HEK293T (cell line): ENCODE measurements at regions of chr17 and their contacts with region 1.

Region 1: GRCh38 chr17:78723001-78723796 is 58.9 kb downstream of the CYTH1 start:
- DNase-seq: peak; percentile 54

Region 2: DNA sequence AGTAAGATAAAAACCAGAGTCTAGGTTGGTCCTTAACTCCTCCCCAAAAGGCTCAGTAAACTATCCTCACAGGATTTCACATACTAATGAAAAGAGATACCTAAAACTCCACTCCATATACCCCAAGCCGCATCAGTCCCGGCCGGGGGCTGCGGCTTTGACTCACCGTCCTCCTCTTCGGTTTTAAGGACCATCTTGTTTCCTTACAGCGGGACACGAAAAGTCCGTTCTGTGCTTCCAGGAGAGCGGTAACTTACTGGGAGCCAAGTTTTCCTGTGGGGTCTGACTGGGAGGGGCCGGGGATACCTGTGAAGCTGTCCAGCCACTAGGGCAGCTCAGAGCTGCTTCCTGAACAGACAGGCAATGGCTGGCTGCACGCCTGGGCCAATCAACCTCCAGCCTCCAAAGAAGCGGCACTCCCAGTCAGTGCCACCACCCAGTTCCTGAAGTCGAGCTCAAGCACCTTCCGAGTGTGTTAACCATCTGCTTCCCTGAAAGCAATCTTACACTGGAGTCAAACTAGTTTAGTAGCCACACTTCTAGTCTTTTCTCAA is 13.4 kb after region 1 on chr17:
- CTCF ChIA-PET with region 1: interaction called, 5 read pairs
- POLR2A ChIA-PET with region 1: interaction called, 42 read pairs
- DNase-seq: peak; percentile 79